ENCODE measurements at regions of chr1 and their contacts with region 1.

Region 1: GRCh38 chr1:227762233-227762911 is 27.1 kb downstream of the SNAP47 start:
- DNase-seq: peak; percentile 94
- ATAC-seq: peak; percentile 78
- H3K4me3 Mint-ChIP-seq: peak overlapping the region; percentile 31
- H3K27ac Mint-ChIP-seq: peak overlapping the region; percentile 77
- H3K4me1 Mint-ChIP-seq: peaks cover 76% of the 10 kb centered on the region
- H3K27me3 Mint-ChIP-seq: no peaks in the 10 kb centered on the region

Region 2: GRCh38 chr1:227774821-227775661 is 12.7 kb after region 1 on chr1:
- CTCF ChIA-PET with region 1: interaction called, 18 read pairs
- POLR2A ChIA-PET with region 1: no interaction called
- DNase-seq: no peak
- ATAC-seq: no peak
- H3K4me3 Mint-ChIP-seq: no peak overlapping the region
- H3K27ac Mint-ChIP-seq: no peak overlapping the region
- H3K4me1 Mint-ChIP-seq: peaks cover 33% of the 10 kb centered on the region
- H3K27me3 Mint-ChIP-seq: no peaks in the 10 kb centered on the region

Region 3: GRCh38 chr1:227816750-227817446 is 54.5 kb after region 1 on chr1:
- CTCF ChIA-PET with region 1: no interaction called
- POLR2A ChIA-PET with region 1: no interaction called
- DNase-seq: no peak
- ATAC-seq: no peak
- H3K4me3 Mint-ChIP-seq: no peak overlapping the region
- H3K27ac Mint-ChIP-seq: no peak overlapping the region
- H3K4me1 Mint-ChIP-seq: peaks cover 5% of the 10 kb centered on the region
- H3K27me3 Mint-ChIP-seq: peaks cover 2% of the 10 kb centered on the region

Region 4: DNA sequence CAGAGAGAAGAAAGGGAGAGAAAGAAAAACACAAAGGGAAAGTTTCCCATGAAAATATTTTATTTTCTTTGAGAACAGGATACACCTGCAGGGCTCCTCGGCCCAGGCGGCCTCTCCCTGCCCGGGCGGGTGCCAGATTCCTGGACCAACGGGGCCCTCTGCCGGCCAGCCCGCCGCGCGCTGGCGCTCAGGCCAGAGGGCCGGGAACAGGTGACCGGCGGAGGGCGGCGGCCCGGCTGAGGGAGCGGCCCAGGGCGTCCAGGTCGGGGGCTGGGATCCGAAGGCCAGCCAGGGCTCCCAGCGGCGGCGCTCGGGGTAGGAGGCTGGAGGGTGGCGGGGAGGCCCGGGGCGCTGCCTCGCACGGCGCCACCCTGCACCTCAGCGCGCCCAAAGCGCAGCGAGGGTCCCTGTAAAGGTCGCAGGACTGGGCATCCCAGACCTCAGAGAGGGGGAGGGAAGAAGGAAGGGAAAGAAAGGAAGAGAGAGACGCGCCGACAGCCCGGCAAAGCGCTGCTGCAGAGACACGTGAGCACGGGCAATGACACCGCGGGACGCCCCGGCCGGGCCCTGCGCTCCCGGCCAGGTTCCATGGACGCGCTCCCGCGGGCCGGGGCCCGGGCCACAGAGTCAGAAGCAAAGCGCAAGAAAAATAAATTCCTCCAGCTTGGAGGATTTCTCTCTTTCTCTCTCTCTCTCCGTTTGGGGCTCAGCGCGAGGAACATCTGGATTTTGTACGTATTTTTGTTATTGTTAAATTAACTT is 184.4 kb after region 1 on chr1:
- CTCF ChIA-PET with region 1: interaction called, 16 read pairs
- POLR2A ChIA-PET with region 1: no interaction called
- DNase-seq: peak; percentile 59
- ATAC-seq: peak; percentile 61
- H3K4me3 Mint-ChIP-seq: peak overlapping the region; percentile 36
- H3K27ac Mint-ChIP-seq: no peak overlapping the region
- H3K4me1 Mint-ChIP-seq: peaks cover 8% of the 10 kb centered on the region
- H3K27me3 Mint-ChIP-seq: peaks cover 29% of the 10 kb centered on the region

Region 5: DNA sequence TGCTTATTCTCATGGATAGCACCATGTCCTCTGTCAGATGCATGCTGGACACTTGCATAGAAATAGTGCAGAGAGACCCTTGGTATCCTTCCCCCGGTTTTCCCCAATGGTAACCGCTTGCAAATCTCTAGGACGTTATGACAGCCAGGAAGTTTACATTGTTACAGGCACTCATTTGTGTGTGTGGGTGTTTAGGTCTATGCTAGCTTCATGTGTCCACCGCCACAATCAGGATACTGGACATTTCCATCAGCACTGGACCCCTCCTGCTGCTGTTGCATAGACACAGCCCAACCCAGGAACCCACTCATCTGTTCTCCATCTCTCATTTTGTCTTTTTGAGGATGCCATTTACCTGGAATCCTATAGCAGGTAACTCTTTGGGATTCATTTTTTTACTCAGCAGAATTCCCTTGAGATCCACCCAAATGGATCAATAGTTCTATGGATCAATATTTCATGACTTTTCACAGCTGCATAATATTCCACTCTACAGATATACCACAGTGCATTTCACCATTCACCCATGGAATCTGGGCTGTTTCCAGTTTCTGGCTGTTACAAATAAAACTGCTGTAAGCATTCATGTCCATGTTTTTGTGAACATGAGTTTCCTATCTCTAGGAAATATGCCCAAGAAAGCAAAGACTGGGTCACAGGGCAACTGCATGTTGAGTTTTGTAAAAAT is 191.9 kb after region 1 on chr1:
- CTCF ChIA-PET with region 1: interaction called, 11 read pairs
- POLR2A ChIA-PET with region 1: no interaction called
- DNase-seq: no peak
- ATAC-seq: no peak
- H3K4me3 Mint-ChIP-seq: no peak overlapping the region
- H3K27ac Mint-ChIP-seq: no peak overlapping the region
- H3K4me1 Mint-ChIP-seq: no peaks in the 10 kb centered on the region
- H3K27me3 Mint-ChIP-seq: peaks cover 42% of the 10 kb centered on the region